Ovary (tissue), 10 donors: ENCODE measurements at regions of chr7 and their contacts with region 1.

Region 1: GRCh38 chr7:50679218-50680007 is 103.3 kb downstream of the GRB10 start:
- DNase-seq: no peak
- H3K4me3 ChIP-seq: no peak overlapping the region
- H3K27ac ChIP-seq: no peak overlapping the region
- H3K4me1 ChIP-seq: peaks cover 5% of the 10 kb centered on the region
- H3K27me3 ChIP-seq: no peaks in the 10 kb centered on the region
- CTCF ChIP-seq: peak in 2 of 3 donors; percentile 51 to 58
- EP300 ChIP-seq: no peak
- POLR2A ChIP-seq: no peak

Region 2: GRCh38 chr7:50142425-50143017 is 536.9 kb before region 1 on chr7:
- intact Hi-C with region 1: loop called in 1 of 4 experiments (anchors 10 kb)
- DNase-seq: no peak
- H3K4me3 ChIP-seq: no peak overlapping the region
- H3K27ac ChIP-seq: no peak overlapping the region
- H3K4me1 ChIP-seq: no peaks in the 10 kb centered on the region
- H3K27me3 ChIP-seq: no peaks in the 10 kb centered on the region
- CTCF ChIP-seq: peak; percentile 32 to 65 (median 53)
- EP300 ChIP-seq: no peak
- POLR2A ChIP-seq: no peak

Region 3: GRCh38 chr7:50467817-50468610 is 211.4 kb before region 1 on chr7:
- intact Hi-C with region 1: loop called (anchors 2 to 5 kb)
- DNase-seq: peak; percentile 78 to 94 (median 88)
- H3K4me3 ChIP-seq: no peak overlapping the region
- H3K27ac ChIP-seq: no peak overlapping the region
- H3K4me1 ChIP-seq: no peaks in the 10 kb centered on the region
- H3K27me3 ChIP-seq: no peaks in the 10 kb centered on the region
- CTCF ChIP-seq: peak; percentile 81 to 95 (median 92)
- EP300 ChIP-seq: no peak
- POLR2A ChIP-seq: no peak

Region 4: DNA sequence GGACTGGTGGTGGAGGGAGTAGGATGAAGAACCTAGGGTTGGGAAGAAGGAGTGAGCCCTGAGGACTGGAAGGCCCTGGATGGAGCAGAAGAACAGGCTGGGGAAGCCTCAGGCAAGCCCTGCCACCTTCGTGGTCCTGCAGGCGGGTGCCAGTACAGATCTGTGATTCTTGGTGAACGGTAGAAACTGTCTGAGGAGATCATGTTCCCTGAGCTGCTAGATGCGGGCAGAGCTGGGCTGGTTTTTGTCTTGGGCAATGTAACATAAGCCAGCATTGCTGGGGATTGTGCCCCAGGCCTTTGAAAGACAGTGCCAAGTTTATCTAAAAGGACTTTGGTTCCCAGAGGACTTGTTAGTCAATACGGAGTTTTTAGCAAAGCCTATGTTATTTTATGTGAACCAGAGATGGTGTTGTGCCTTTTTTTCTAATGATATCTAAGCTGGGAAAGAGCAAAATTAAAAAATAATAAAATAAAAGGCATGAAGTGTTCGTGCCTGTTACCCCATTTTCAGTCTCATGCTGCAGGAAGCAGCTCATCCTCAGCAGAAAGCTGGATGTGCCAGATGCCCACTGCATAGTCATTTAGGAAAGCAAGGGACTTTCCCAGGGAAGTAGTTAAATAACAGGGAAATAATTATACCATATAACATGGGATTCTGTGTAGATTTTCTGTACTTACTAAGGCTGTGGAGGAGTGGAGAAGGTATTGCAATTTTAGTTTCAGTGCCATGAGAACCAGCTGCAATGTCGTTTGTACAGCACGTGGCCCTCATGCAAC is 204.8 kb before region 1 on chr7:
- intact Hi-C with region 1: loop called (anchors 2 to 5 kb)
- DNase-seq: no peak
- H3K4me3 ChIP-seq: no peak overlapping the region
- H3K27ac ChIP-seq: no peak overlapping the region
- H3K4me1 ChIP-seq: no peaks in the 10 kb centered on the region
- H3K27me3 ChIP-seq: no peaks in the 10 kb centered on the region
- CTCF ChIP-seq: no peak
- EP300 ChIP-seq: no peak
- POLR2A ChIP-seq: no peak